Gastrocnemius medialis (tissue), 4 donors: ENCODE measurements at regions of chr1 and their contacts with region 1.

Region 1: DNA sequence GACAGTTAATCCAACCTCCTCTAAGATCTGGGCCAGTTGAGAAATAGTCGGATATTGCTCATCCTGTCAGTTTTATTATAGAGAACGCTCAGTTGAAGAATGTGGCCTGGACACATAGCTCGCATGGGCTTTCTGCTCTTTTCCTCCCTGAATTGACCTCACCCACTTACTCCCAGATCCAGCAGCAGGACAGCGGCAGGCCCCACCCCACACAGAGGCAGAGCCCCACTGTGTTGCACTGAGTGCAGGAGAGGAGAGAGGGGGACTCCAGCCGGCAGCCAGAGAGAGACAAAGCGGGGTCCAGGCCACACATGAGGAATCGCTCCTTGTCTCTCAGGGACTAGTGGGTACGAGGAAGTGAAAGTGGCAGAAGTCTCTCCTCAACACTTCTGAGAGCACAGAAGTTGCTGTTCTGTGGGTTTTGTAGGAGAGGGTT is 78.6 kb downstream of the LAMC1 start:
- DNase-seq: no peak
- ATAC-seq: no peak
- H3K4me3 ChIP-seq: no peak overlapping the region
- H3K27ac ChIP-seq: peak overlapping the region; percentile 83 to 93 (median 91)
- H3K4me1 ChIP-seq: peaks cover 86 to 93% of the 10 kb centered on the region in 2 donors
- H3K27me3 ChIP-seq: no peaks in the 10 kb centered on the region
- CTCF ChIP-seq: no peak
- POLR2A ChIP-seq: no peak

Region 2: GRCh38 chr1:182839209-182840065 is 262.4 kb before region 1 on chr1 and contains the start of gene DHX9:
- in situ Hi-C with region 1: loop called in 1 of 4 experiments (anchors 25 kb)
- intact Hi-C with region 1: no loop called
- DNase-seq: peak; percentile 81 to 85
- ATAC-seq: peak; percentile 94 to 96
- H3K4me3 ChIP-seq: peak within 1 kb of the TSS; percentile 55 to 97 (median 87)
- H3K27ac ChIP-seq: peak within 1 kb of the TSS; percentile 84 to 98 (median 90)
- H3K4me1 ChIP-seq: peaks cover 29 to 41% of the 10 kb centered on the region in 2 donors
- H3K27me3 ChIP-seq: no peaks in the 10 kb centered on the region
- CTCF ChIP-seq: peak in 4 of 5 experiments; percentile 6 to 24 (median 19)
- POLR2A ChIP-seq: peak; percentile 79 to 87
- total RNA-seq, gene DHX9: 37.7 to 58.8 (median 48.4) TPM

Region 3: GRCh38 chr1:183023601-183024316 is 78.1 kb before region 1 on chr1:
- in situ Hi-C with region 1: no loop called
- intact Hi-C with region 1: loop called (anchors 2 kb)
- DNase-seq: peak; percentile 85
- ATAC-seq: peak; percentile 57 to 61
- H3K4me3 ChIP-seq: peak overlapping the region; percentile 76 to 91 (median 85)
- H3K27ac ChIP-seq: peak overlapping the region; percentile 94 to 100 (median 98)
- H3K4me1 ChIP-seq: peaks cover 48 to 64% of the 10 kb centered on the region in 2 donors
- H3K27me3 ChIP-seq: no peaks in the 10 kb centered on the region
- CTCF ChIP-seq: peak; percentile 62 to 81 (median 78)
- POLR2A ChIP-seq: peak; percentile 46 to 60

Region 4: GRCh38 chr1:183061194-183061593 is 40.7 kb before region 1 on chr1:
- in situ Hi-C with region 1: no loop called
- intact Hi-C with region 1: loop called (anchors 5 kb)
- DNase-seq: no peak
- ATAC-seq: no peak
- H3K4me3 ChIP-seq: no peak overlapping the region
- H3K27ac ChIP-seq: peak overlapping the region in 3 of 4 donors; percentile 32 to 66 (median 40)
- H3K4me1 ChIP-seq: peaks cover 50 to 77% of the 10 kb centered on the region in 2 donors
- H3K27me3 ChIP-seq: no peaks in the 10 kb centered on the region
- CTCF ChIP-seq: no peak
- POLR2A ChIP-seq: no peak

Region 5: GRCh38 chr1:183850852-183851251 is 749.0 kb after region 1 on chr1:
- in situ Hi-C with region 1: no loop called
- intact Hi-C with region 1: no loop called
- DNase-seq: no peak
- ATAC-seq: no peak
- H3K4me3 ChIP-seq: no peak overlapping the region
- H3K27ac ChIP-seq: no peak overlapping the region
- H3K4me1 ChIP-seq: no peaks in the 10 kb centered on the region
- H3K27me3 ChIP-seq: no peaks in the 10 kb centered on the region
- CTCF ChIP-seq: no peak
- POLR2A ChIP-seq: no peak